Activated naive CD4-positive, alpha-beta T cell treated with anti-CD3 and anti-CD28 coated beads for 36 hours (primary cell): ENCODE measurements at regions of chr2 and their contacts with region 1.

Region 1: GRCh38 chr2:176126929-176127773 is 2.4 kb upstream of the HOXD8 start:
- DNase-seq: peak; percentile 81
- H3K4me3 Mint-ChIP-seq: no peak overlapping the region
- H3K27ac Mint-ChIP-seq: no peak overlapping the region
- H3K4me1 Mint-ChIP-seq: peaks cover 25% of the 10 kb centered on the region
- H3K27me3 Mint-ChIP-seq: peaks cover 68% of the 10 kb centered on the region

Region 2: DNA sequence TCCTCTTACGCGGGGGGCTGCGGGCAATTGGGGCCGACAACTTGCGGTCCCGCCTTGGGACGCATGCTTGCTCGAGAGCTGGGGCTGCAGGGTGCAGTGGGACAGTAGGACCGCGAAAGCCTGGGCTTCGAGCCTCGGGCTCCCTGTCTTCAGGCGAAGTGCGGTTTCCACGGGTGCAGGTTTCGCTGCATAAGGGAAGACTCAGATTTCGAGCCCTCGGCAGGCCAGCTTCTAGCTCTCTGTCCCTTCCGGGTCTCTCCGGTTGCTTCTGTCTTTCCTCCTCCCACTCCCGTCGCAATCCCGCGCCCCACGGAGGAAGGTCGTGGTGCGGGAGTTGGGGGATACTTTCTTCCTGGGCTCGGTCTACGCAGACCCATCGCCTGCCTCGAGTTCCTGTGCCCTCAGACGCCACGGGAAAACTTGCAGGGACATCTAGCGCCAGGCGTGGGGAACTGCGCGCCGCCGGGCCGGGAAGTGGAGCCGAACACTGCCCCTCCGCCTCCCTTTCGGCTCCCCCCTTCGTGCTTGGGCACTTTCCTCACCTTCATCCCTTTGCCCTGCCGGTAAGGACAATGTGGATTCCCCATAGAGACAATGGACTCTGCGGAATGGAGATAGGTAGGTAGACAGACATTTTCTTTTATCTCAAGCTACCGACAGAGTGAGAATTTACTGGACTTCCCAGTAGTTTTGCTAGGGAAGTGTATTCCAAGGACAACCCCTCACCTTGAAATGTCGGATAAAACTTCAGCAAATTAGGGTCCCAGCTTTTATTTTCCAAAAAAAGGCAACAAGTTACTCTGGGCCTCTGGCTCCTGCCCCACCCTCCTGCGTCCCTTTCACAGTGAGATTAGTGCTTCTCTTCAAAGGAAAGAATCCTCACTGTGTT is 38.9 kb before region 1 on chr2:
- CTCF ChIA-PET with region 1: interaction called, 3 read pairs
- intact Hi-C with region 1: loop called (anchors 5 kb)
- DNase-seq: peak; percentile 46
- H3K4me3 Mint-ChIP-seq: no peak overlapping the region
- H3K27ac Mint-ChIP-seq: no peak overlapping the region
- H3K4me1 Mint-ChIP-seq: peaks cover 9% of the 10 kb centered on the region
- H3K27me3 Mint-ChIP-seq: peaks cover 88% of the 10 kb centered on the region

Region 3: DNA sequence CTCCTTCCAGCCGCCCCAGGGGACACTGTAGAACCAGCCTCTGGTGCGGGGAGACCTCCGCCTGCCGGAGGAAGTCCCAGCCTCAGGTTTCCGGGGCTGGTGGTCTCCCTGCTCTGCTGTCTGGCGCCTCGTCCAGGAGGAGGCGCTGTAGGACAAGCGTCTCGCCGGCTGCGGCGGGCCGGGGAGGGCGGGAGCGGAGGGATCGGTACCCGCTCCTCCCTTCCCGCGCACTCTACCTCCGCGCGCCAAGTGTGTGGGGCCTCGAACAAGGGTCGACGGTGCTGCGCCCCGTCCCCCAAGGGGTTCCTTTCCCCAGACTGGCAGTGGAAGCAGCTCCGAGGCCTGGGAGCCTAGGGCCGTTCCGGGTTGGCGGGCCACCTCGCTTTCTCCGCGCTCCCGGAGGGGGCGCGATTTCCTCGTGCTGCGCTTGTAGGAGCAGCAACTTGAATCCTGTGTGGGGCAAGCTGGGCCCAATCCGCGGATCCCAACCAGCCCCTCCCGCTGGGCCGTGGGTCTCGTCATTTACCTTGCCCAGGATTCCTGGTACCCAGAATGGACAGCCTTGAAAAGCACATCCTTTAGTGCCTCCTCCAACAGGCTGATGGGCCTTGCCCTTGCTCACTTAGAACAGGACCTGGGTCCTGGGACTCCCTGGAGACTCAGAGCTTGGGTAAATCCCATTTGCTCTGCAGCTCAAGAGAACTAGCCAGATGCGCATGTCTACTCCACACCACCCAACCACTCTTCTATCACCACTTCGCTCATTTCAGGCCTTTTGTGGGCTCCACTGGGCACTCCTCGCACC is 13.6 kb after region 1 on chr2:
- CTCF ChIA-PET with region 1: interaction called, 24 read pairs
- intact Hi-C with region 1: loop called (anchors 1 kb)
- DNase-seq: peak; percentile 74
- H3K4me3 Mint-ChIP-seq: peak overlapping the region; percentile 42
- H3K27ac Mint-ChIP-seq: no peak overlapping the region
- H3K4me1 Mint-ChIP-seq: peaks cover 21% of the 10 kb centered on the region
- H3K27me3 Mint-ChIP-seq: peaks cover 83% of the 10 kb centered on the region

Region 4: GRCh38 chr2:176174824-176175708 is 47.9 kb after region 1 on chr2:
- CTCF ChIA-PET with region 1: no interaction called
- intact Hi-C with region 1: loop called (anchors 5 kb)
- DNase-seq: no peak
- H3K4me3 Mint-ChIP-seq: no peak overlapping the region
- H3K27ac Mint-ChIP-seq: no peak overlapping the region
- H3K4me1 Mint-ChIP-seq: peaks cover 24% of the 10 kb centered on the region
- H3K27me3 Mint-ChIP-seq: peaks cover 78% of the 10 kb centered on the region

Region 5: GRCh38 chr2:176297067-176297466 is 169.9 kb after region 1 on chr2:
- CTCF ChIA-PET with region 1: no interaction called
- intact Hi-C with region 1: no loop called
- DNase-seq: no peak
- H3K4me3 Mint-ChIP-seq: no peak overlapping the region
- H3K27ac Mint-ChIP-seq: no peak overlapping the region
- H3K4me1 Mint-ChIP-seq: peaks cover 4% of the 10 kb centered on the region
- H3K27me3 Mint-ChIP-seq: no peaks in the 10 kb centered on the region

Region 6: DNA sequence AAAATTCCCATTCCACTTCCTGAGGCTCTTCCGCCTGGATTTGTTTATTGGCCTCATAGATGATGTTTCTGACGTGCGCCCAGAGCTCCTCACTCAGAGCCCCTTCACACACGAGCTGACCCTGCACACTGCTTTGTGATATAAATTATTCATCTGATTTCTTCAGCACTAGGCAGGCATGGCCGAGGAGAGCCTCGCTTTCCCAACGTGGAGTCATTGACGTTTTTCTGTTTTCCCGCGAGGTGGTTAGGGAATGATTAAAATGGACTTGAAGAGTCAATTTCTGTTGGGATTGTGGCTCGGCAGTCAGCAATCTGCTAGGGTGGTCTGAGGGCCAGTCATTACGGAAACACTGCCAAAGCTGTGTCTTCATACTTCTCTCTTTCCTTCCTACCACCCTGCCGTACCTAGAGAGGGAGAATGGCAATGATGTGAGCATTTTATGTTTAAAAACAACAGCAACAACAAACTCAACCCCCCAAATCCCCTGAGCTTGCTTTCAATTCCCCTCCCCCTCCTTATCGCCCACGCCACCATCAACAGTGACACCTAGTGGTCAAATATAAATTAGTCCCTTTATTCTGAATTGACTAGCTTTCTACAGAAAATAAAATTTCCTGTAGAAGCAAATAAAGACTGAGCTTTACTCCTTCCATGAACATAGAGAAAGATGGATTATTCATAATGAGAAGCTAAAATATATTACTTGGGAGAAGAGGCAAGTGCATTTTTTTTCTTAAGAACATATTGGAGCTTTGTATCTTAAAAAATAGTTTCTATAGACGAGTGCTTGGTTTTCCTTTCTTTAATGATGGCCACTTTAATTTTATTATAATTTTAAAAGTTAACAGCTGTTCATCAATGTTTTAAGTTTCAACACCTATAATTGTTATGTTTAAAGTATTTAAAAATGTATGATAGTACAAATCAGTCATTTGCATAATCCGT is 427.2 kb after region 1 on chr2:
- CTCF ChIA-PET with region 1: interaction called, 17 read pairs
- intact Hi-C with region 1: loop called (anchors 1 kb)
- DNase-seq: peak; percentile 45
- H3K4me3 Mint-ChIP-seq: peak overlapping the region; percentile 72
- H3K27ac Mint-ChIP-seq: no peak overlapping the region
- H3K4me1 Mint-ChIP-seq: peaks cover 12% of the 10 kb centered on the region
- H3K27me3 Mint-ChIP-seq: peaks cover 39% of the 10 kb centered on the region

Region 7: DNA sequence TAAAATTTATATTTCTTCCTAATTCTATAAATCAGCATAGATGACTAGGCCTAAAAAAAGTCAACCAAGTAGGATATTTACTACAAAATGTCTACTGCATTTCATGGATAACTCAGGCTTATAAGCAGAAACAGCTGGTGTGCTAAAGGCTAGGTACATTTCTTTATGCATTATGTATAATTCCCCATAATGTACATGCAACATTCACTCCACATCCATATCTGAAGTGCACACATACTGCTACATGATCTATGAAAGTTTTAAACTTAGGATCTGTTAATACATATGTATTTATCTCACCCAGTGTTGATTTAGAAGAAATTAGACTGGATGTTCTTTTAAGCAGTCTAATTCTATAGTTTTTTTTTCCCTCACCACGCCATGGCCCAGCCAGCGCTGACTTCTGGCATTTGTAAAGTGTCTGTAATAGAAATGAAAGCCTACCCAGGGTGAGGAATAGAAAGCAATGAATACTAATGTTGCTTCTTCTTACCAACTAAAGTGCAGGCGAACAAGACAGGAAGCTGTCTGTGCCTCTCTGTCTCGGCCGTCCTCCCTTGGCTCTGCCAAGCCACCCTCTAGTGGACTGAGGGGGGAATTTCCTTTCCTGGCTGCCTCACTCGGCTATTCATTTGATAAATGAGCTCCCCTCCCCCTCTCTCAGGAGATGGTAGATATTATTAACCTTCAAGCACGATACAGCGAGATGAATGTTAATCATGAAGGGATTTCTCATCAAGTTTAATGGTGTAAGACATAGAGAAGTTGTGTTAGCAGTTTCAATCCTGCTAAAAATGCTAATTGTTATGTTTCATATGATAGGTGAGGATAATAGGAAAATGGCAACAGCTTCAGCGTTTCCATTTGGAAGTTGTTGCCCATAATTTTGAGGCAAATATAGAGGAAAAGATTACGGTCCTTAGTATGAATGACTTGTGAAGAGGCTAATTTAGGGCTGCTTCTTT is 526.6 kb after region 1 on chr2:
- CTCF ChIA-PET with region 1: interaction called, 46 read pairs
- intact Hi-C with region 1: loop called (anchors 1 kb)
- DNase-seq: peak; percentile 59
- H3K4me3 Mint-ChIP-seq: no peak overlapping the region
- H3K27ac Mint-ChIP-seq: no peak overlapping the region
- H3K4me1 Mint-ChIP-seq: peaks cover 4% of the 10 kb centered on the region
- H3K27me3 Mint-ChIP-seq: peaks cover 32% of the 10 kb centered on the region

Region 8: DNA sequence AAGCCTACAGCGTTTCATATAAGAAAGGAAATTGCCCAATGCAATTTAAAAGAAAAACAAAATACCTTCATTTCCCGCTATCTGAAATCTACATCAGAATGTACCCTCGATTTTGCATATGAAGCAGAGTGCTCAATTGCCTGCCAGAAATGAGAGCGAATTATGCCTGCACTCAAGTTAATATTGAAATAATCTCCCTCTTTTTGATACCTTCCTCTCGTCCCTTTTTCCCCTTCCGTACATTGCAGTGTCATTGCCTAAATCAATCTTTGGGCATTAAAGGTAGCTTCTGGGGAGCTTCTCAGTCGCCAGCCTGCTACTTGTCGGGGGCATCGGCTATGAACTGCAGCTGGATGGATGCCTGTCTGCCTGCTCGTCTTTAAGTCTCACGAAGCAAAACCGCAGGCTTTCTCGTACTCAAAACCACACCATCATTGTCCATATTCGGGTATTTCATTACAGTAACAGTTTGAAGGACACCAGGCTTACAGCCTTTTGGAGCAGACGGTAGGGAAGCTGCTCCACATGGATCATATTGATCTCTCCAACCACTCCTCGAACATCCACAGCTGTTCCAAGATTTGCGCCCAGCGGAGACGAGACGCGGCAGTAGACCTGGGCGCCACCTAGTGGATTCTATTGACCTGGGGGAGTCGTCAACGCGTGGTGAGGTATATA is 1021.5 kb after region 1 on chr2:
- CTCF ChIA-PET with region 1: interaction called, 22 read pairs
- intact Hi-C with region 1: loop called (anchors 1 kb)
- DNase-seq: peak; percentile 85
- H3K4me3 Mint-ChIP-seq: peak overlapping the region; percentile 82
- H3K27ac Mint-ChIP-seq: no peak overlapping the region
- H3K4me1 Mint-ChIP-seq: peaks cover 10% of the 10 kb centered on the region
- H3K27me3 Mint-ChIP-seq: peaks cover 22% of the 10 kb centered on the region